Activated CD4-positive, alpha-beta memory T cell treated with anti-CD3 and anti-CD28 coated beads for 36 hours (primary cell): ENCODE measurements at regions of chr15 and their contacts with region 1.

Region 1: GRCh38 chr15:35545824-35546510 is at the start of gene DPH6:
- DNase-seq: peak; percentile 85
- H3K4me3 Mint-ChIP-seq: peak within 1 kb of the TSS; percentile 94
- H3K27ac Mint-ChIP-seq: peak within 1 kb of the TSS; percentile 94
- H3K4me1 Mint-ChIP-seq: peaks cover 18% of the 10 kb centered on the region
- H3K27me3 Mint-ChIP-seq: no peaks in the 10 kb centered on the region
- total RNA-seq, gene DPH6: 14.3 to 15.9 TPM

Region 2: GRCh38 chr15:35657679-35658311 is 111.8 kb after region 1 on chr15:
- CTCF ChIA-PET with region 1: no interaction called
- POLR2A ChIA-PET with region 1: no interaction called
- intact Hi-C with region 1: loop called (anchors 5 kb)
- DNase-seq: peak; percentile 65
- H3K4me3 Mint-ChIP-seq: no peak overlapping the region
- H3K27ac Mint-ChIP-seq: peak overlapping the region; percentile 26
- H3K4me1 Mint-ChIP-seq: peaks cover 11% of the 10 kb centered on the region
- H3K27me3 Mint-ChIP-seq: peaks cover 19% of the 10 kb centered on the region

Region 3: DNA sequence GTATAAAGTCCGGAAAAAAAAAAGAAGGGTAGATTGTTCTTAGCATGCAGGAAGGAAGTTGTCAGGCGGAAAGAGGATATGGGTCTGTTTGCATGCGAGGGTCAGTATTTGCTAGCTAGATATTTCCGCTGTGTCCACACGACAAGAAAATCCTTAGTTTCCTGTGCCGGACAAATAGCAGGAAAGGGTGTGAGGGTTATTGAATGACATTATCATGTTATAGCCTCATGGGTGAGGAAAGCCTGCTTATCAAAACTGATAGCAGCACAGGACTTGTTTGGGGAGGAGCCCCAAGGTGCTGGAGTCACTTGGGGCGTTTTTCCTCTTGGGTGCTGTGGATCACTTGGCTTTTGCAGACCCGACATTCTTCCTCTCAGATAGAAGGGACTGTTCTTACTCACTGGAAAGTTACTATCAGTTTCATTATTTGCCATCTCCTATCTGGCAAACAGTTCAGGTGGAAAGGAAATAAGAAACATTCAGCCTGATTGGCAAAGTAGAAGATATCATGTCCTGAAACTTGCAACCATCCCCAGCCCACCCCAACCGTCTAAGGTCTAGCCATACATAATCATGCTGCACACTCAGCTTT is 127.2 kb after region 1 on chr15:
- CTCF ChIA-PET with region 1: no interaction called
- POLR2A ChIA-PET with region 1: no interaction called
- intact Hi-C with region 1: loop called (anchors 2 kb)
- DNase-seq: peak; percentile 32
- H3K4me3 Mint-ChIP-seq: no peak overlapping the region
- H3K27ac Mint-ChIP-seq: no peak overlapping the region
- H3K4me1 Mint-ChIP-seq: peaks cover 12% of the 10 kb centered on the region
- H3K27me3 Mint-ChIP-seq: peaks cover 10% of the 10 kb centered on the region

Region 4: GRCh38 chr15:36579792-36580431 is 1033.9 kb after region 1 on chr15:
- CTCF ChIA-PET with region 1: no interaction called
- POLR2A ChIA-PET with region 1: no interaction called
- intact Hi-C with region 1: loop called (anchors 5 kb)
- DNase-seq: peak; percentile 42
- H3K4me3 Mint-ChIP-seq: peak overlapping the region; percentile 79
- H3K27ac Mint-ChIP-seq: no peak overlapping the region
- H3K4me1 Mint-ChIP-seq: peaks cover 25% of the 10 kb centered on the region
- H3K27me3 Mint-ChIP-seq: no peaks in the 10 kb centered on the region